ENCODE measurements at regions of chr10 and their contacts with region 1.

Region 1: DNA sequence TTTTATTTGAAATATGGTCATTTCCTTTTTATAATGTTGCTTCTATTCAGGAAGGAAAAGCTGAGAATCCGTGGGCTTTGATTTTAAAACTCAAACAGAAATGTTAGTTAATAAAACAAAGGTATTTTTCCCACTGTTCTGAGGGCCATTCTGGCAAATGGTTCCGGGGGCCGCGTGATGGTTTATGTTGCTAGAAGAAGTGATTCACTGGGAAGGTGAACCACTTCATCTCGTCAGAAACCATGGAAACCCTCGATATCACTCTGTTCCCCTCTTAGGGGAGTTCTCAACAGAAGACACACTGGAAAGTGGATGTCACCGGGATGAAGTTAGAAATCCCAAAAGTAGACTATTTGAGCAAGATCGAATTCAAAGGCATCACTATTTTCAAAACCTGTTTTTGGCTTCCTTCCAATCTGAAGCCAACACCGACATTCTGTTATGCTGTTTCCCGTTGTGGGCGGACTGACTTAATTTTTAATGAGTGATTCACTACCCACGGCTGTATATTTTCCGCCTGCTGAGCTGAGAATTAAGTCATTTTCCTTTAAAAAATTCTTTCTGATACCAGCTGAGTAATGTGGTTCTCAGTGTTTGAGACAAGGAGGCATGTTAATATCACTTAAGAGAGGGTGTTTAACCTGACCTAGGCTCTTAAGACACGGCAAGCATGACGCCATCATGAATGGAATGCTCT is 84.1 kb downstream of the PTPRE start:
- DNase-seq: peak; percentile 80
- H3K4me3 Mint-ChIP-seq: peak overlapping the region; percentile 54
- H3K27ac Mint-ChIP-seq: peak overlapping the region; percentile 92
- H3K4me1 Mint-ChIP-seq: peaks cover 56% of the 10 kb centered on the region
- H3K27me3 Mint-ChIP-seq: peaks cover 2% of the 10 kb centered on the region

Region 2: GRCh38 chr10:127945335-127945734 is 45.7 kb before region 1 on chr10:
- CTCF ChIA-PET with region 1: no interaction called
- POLR2A ChIA-PET with region 1: no interaction called
- intact Hi-C with region 1: loop called (anchors 2 kb)
- DNase-seq: peak; percentile 36
- H3K4me3 Mint-ChIP-seq: no peak overlapping the region
- H3K27ac Mint-ChIP-seq: no peak overlapping the region
- H3K4me1 Mint-ChIP-seq: peaks cover 18% of the 10 kb centered on the region
- H3K27me3 Mint-ChIP-seq: peaks cover 3% of the 10 kb centered on the region

Region 3: DNA sequence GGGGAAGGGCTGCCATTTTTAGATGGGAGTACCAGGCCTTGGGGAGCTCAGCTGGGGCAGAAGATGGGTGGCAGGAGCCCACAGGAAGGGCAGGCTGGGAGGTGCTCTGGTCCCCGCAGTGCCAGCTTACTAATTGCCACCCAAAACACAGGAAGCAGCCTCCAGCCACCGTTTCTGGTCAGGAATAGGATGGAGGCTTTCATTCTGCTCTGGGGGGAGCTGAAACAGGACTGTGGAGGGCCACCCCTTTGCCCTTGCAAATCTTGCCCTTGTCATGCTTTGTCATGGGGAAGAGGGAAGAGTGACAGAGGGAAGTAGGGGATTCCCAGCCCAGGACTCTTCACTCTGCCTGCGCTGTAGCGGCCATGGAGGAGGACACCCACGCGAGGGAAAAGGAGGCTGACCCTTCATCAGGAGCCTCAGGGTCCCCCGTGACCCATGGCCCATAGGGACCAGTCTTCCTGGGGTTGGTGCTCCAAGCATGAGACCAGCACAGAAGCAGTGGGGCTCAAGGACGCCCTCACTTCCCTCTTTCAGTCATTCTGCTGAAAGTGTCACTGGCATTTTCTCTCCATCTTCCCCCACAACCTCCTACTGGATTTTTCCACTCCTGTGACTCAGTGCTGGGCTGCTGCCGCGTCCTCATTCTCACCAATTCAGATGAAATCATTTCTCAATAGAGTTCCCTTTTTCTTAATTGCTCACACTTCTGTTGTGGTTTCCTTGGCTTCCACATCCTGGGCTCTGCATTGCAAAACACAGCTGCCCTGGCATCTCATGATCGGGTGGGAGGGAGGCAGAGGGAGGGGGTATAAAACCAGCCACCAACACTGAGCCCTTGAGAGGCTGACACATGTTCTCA is 73.3 kb after region 1 on chr10:
- CTCF ChIA-PET with region 1: interaction called, 11 read pairs
- POLR2A ChIA-PET with region 1: interaction called, 17 read pairs
- intact Hi-C with region 1: loop called (anchors 1 kb)
- DNase-seq: peak; percentile 91
- H3K4me3 Mint-ChIP-seq: peak overlapping the region; percentile 59
- H3K27ac Mint-ChIP-seq: peak overlapping the region; percentile 96
- H3K4me1 Mint-ChIP-seq: peaks cover 58% of the 10 kb centered on the region
- H3K27me3 Mint-ChIP-seq: no peaks in the 10 kb centered on the region

Region 4: DNA sequence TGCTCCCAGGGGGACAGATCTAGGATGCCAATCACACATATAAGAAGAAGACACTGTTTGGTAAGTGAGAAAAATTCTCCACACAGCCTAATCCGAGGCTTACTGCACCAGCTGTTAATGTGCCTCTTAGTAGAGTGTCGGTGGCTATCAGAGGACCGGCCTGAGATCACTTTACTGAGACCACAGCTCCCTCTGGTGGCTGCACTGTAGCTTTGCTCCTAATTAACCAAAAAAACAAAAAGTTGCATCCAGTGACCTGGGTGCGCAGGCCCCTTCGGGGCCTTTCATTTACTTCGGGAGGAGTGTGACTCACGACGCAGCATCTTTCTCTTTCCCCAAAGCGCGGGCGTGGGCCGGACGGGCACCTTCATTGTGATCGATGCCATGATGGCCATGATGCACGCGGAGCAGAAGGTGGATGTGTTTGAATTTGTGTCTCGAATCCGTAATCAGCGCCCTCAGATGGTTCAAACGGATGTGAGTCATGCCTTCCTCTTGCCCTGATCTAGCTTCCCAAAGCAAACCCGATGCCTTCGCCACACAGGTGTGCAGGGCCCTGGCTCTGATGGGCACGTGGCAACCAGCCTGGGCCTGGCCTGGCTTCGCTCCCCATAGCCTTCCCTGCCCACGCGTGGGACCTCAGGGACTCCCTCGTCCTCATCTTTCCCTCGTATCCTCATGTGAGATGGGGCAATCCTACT is 78.5 kb after region 1 on chr10:
- CTCF ChIA-PET with region 1: interaction called, 11 read pairs
- POLR2A ChIA-PET with region 1: interaction called, 17 read pairs
- intact Hi-C with region 1: loop called (anchors 1 kb)
- DNase-seq: peak; percentile 86
- H3K4me3 Mint-ChIP-seq: no peak overlapping the region
- H3K27ac Mint-ChIP-seq: no peak overlapping the region
- H3K4me1 Mint-ChIP-seq: peaks cover 35% of the 10 kb centered on the region
- H3K27me3 Mint-ChIP-seq: no peaks in the 10 kb centered on the region

Region 5: GRCh38 chr10:128125944-128126764 is 135.2 kb after region 1 on chr10 and contains the start of gene MKI67:
- CTCF ChIA-PET with region 1: no interaction called
- POLR2A ChIA-PET with region 1: no interaction called
- intact Hi-C with region 1: loop called (anchors 1 kb)
- DNase-seq: peak; percentile 95
- H3K4me3 Mint-ChIP-seq: peak within 1 kb of the TSS; percentile 96
- H3K27ac Mint-ChIP-seq: peak within 1 kb of the TSS; percentile 90
- H3K4me1 Mint-ChIP-seq: peaks cover 24% of the 10 kb centered on the region
- H3K27me3 Mint-ChIP-seq: peaks cover 19% of the 10 kb centered on the region
- total RNA-seq, gene MKI67: 223 to 241 TPM